MCF 10A (cell line): ENCODE measurements at regions of chr6 and their contacts with region 1.

Region 1: GRCh38 chr6:33620856-33621710 is at the start of gene ITPR3:
- DNase-seq: peak; percentile 81
- H3K4me3 Mint-ChIP-seq: peak within 1 kb of the TSS; percentile 86
- H3K27ac Mint-ChIP-seq: peak within 1 kb of the TSS; percentile 95
- H3K4me1 Mint-ChIP-seq: peaks cover 42% of the 10 kb centered on the region
- H3K27me3 Mint-ChIP-seq: no peaks in the 10 kb centered on the region
- CTCF ChIP-seq: no peak
- total RNA-seq, gene ITPR3: 86.9 and 109 TPM in 2 replicates

Region 2: GRCh38 chr6:33384581-33385020 is 236.5 kb before region 1 on chr6:
- CTCF ChIA-PET with region 1: no interaction called
- POLR2A ChIA-PET with region 1: no interaction called
- intact Hi-C with region 1: no loop called
- DNase-seq: peak; percentile 78
- H3K4me3 Mint-ChIP-seq: no peak overlapping the region
- H3K27ac Mint-ChIP-seq: no peak overlapping the region
- H3K4me1 Mint-ChIP-seq: peaks cover 14% of the 10 kb centered on the region
- H3K27me3 Mint-ChIP-seq: no peaks in the 10 kb centered on the region
- CTCF ChIP-seq: peak; percentile 37

Region 3: DNA sequence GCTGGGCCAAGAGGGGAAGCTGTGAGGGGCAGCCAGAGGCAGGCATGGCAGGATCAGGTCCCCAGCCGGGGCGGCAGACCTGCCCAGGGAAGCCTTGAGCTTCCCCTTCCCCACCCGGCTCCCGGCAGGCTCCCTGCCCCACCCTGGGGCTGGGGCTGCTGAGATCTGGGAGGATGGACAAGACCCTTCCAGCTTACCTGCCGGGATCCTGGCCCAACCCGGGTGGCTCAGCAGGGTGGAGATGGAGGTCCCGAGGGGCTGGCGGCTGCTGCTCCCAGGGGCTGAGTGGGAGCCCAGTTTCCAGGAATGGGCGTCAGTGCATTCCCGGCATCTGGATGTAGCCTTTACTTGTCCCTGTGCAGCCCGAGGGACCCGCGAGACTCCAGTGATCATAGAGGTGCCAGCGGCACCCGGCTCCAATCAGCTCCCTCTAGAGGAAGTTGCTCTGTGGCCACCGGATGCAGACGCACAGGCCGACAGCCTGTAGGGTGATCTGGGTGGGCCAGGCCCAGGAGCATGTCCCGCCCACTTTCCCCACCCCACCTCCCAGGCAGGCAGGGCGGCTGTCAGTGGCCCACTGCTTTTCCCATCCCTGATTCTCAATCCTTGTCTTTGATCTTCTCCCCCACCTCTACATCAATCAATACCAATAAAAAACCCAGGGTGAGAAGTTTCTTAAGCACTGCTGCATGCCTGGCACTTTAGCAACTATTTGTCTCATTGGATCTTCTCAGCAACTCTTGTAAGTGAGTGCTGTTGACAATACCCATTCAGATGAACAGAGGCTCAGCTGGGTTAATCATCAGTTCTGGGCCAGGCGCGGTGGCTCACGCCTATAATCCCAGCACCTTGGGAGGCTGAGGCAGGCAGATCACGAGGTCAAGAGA is 41.0 kb before region 1 on chr6 and contains the start of gene BAK1:
- CTCF ChIA-PET with region 1: interaction called, 26 read pairs
- POLR2A ChIA-PET with region 1: interaction called, 16 read pairs
- intact Hi-C with region 1: no loop called
- DNase-seq: peak; percentile 90
- H3K4me3 Mint-ChIP-seq: peak within 1 kb of the TSS; percentile 85
- H3K27ac Mint-ChIP-seq: peak within 1 kb of the TSS; percentile 97
- H3K4me1 Mint-ChIP-seq: peaks cover 28% of the 10 kb centered on the region
- H3K27me3 Mint-ChIP-seq: no peaks in the 10 kb centered on the region
- CTCF ChIP-seq: peak; percentile 42
- total RNA-seq, gene BAK1: 45.8 and 57.7 TPM in 2 replicates

Region 4: DNA sequence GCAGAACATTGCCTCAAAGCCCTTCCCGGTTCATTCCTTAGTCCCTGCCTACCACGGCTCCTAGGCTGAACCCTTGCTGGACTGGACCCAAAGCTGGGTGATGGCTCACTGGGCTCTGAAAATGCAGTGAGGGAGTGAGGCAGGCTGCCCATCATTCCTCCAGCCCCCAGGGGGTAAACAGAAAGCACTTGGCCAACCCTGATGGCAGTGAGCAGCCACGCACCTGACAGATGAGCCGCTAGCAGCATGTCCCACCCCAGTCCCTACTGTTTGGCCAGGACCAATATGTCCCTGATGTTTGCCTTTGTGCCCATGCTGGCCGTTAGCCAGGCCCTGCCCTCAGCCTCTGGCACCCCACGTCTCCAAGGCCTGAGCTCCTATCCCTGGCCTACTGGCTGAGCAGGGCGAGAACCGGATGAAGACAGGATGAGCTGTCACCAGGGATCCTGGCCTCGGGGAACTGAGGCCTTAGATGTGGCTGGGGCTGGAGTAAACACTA is 21.6 kb before region 1 on chr6:
- CTCF ChIA-PET with region 1: interaction called, 3 read pairs
- POLR2A ChIA-PET with region 1: interaction called, 14 read pairs
- intact Hi-C with region 1: no loop called
- DNase-seq: peak; percentile 84
- H3K4me3 Mint-ChIP-seq: no peak overlapping the region
- H3K27ac Mint-ChIP-seq: peak overlapping the region; percentile 76
- H3K4me1 Mint-ChIP-seq: peaks cover 17% of the 10 kb centered on the region
- H3K27me3 Mint-ChIP-seq: no peaks in the 10 kb centered on the region
- CTCF ChIP-seq: no peak

Region 5: GRCh38 chr6:33607784-33608161 is 13.3 kb before region 1 on chr6:
- CTCF ChIA-PET with region 1: interaction called, 5 read pairs
- POLR2A ChIA-PET with region 1: interaction called, 25 read pairs
- intact Hi-C with region 1: no loop called
- DNase-seq: peak; percentile 71
- H3K4me3 Mint-ChIP-seq: no peak overlapping the region
- H3K27ac Mint-ChIP-seq: no peak overlapping the region
- H3K4me1 Mint-ChIP-seq: peaks cover 21% of the 10 kb centered on the region
- H3K27me3 Mint-ChIP-seq: no peaks in the 10 kb centered on the region
- CTCF ChIP-seq: peak; percentile 42

Region 6: GRCh38 chr6:33633462-33634158 is 12.5 kb after region 1 on chr6:
- CTCF ChIA-PET with region 1: interaction called, 24 read pairs
- POLR2A ChIA-PET with region 1: interaction called, 51 read pairs
- intact Hi-C with region 1: no loop called
- DNase-seq: peak; percentile 73
- H3K4me3 Mint-ChIP-seq: peak overlapping the region; percentile 72
- H3K27ac Mint-ChIP-seq: no peak overlapping the region
- H3K4me1 Mint-ChIP-seq: peaks cover 50% of the 10 kb centered on the region
- H3K27me3 Mint-ChIP-seq: no peaks in the 10 kb centered on the region
- CTCF ChIP-seq: no peak

Region 7: GRCh38 chr6:33672808-33673207 is 51.7 kb after region 1 on chr6:
- CTCF ChIA-PET with region 1: interaction called, 7 read pairs
- POLR2A ChIA-PET with region 1: interaction called, 32 read pairs
- intact Hi-C with region 1: loop called (anchors 2 kb)
- DNase-seq: peak; percentile 96
- H3K4me3 Mint-ChIP-seq: no peak overlapping the region
- H3K27ac Mint-ChIP-seq: peak overlapping the region; percentile 83
- H3K4me1 Mint-ChIP-seq: peaks cover 10% of the 10 kb centered on the region
- H3K27me3 Mint-ChIP-seq: no peaks in the 10 kb centered on the region
- CTCF ChIP-seq: peak; percentile 57

Region 8: GRCh38 chr6:33700391-33701050 is 79.4 kb after region 1 on chr6:
- CTCF ChIA-PET with region 1: interaction called, 6 read pairs
- POLR2A ChIA-PET with region 1: interaction called, 10 read pairs
- intact Hi-C with region 1: no loop called
- DNase-seq: peak; percentile 85
- H3K4me3 Mint-ChIP-seq: no peak overlapping the region
- H3K27ac Mint-ChIP-seq: no peak overlapping the region
- H3K4me1 Mint-ChIP-seq: peaks cover 19% of the 10 kb centered on the region
- H3K27me3 Mint-ChIP-seq: no peaks in the 10 kb centered on the region
- CTCF ChIP-seq: peak; percentile 69